ENCODE measurements at regions of chrX and their contacts with region 1.

Region 1: DNA sequence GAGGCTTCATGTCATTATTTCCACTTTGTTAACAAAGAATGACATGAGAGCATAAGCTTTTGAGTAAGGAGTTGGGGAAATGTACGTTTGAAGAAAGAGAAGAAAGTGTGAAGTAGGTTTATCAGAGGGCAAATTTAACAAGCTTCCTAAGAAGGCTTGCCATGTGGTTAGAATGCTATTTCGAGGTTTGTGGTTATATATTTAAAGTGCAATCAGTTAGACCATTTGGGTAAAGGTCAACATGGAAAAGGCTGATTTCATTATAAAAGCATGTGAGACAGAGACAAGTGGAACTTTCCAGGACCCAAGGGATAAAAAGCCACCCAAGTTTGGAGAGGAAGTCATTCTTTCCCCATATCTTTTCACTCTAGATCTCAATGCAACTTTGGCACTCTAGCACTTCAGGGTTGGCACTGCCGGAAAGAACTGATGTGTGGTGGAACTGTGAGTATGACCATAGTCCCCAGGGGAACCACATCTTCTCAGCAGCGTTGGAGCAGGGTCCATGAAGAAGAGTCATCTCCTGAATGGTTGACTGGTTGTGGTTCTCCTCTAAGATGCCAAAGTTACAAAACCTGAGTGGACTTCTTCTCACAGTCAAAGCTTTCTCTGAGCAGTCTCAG is 529.9 kb downstream of the MID1IP1 start:
- DNase-seq: peak; percentile 65
- H3K4me3 Mint-ChIP-seq: peak overlapping the region; percentile 75
- H3K27ac Mint-ChIP-seq: peak overlapping the region; percentile 91
- H3K4me1 Mint-ChIP-seq: peaks cover 63% of the 10 kb centered on the region
- H3K27me3 Mint-ChIP-seq: no peaks in the 10 kb centered on the region

Region 2: DNA sequence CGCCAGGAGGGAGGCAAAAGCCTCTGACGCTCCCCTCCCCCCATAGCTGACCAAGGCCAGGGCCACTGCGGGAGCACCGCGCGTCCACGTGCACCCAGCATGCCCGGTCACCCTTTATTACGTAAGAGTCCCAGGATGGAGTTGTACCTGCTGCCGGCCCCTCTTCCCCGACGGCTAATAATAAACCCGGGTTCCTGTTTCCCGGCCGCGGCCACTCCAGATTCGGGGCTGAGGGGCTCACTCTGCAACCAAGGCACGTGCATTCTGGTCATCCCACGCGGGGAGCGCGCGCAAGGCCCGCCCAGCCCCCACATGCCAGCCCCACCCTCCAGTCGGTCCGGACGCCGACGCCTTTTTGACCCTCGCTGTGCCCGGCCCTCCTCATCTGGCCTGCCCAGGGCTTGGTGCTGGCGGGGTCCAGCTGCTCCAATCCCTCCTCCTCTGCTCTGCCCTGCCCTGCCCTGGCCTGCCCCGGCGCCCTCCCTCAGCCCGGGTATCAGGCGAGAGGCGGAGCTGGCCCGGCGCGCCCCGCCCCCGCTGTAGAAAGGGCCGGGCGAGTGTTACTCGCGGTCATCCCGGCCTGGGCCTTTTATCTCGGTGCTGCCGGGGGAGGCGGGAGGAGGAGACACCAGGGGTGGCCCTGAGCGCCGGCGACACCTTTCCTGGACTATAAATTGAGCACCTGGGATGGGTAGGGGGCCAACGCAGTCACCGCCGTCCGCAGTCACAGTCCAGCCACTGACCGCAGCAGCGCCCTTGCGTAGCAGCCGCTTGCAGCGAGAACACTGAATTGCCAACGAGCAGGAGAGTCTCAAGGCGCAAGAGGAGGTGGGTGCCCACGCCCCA is 527.4 kb before region 1 on chrX:
- intact Hi-C with region 1: loop called (anchors 5 kb)
- DNase-seq: peak; percentile 93
- H3K4me3 Mint-ChIP-seq: peak overlapping the region; percentile 96
- H3K27ac Mint-ChIP-seq: peak overlapping the region; percentile 99
- H3K4me1 Mint-ChIP-seq: peaks cover 16% of the 10 kb centered on the region
- H3K27me3 Mint-ChIP-seq: no peaks in the 10 kb centered on the region

Region 3: GRCh38 chrX:39196192-39197102 is 134.7 kb before region 1 on chrX:
- intact Hi-C with region 1: loop called (anchors 5 kb)
- DNase-seq: peak; percentile 85
- H3K4me3 Mint-ChIP-seq: peak overlapping the region; percentile 47
- H3K27ac Mint-ChIP-seq: peak overlapping the region; percentile 91
- H3K4me1 Mint-ChIP-seq: peaks cover 47% of the 10 kb centered on the region
- H3K27me3 Mint-ChIP-seq: no peaks in the 10 kb centered on the region

Region 4: DNA sequence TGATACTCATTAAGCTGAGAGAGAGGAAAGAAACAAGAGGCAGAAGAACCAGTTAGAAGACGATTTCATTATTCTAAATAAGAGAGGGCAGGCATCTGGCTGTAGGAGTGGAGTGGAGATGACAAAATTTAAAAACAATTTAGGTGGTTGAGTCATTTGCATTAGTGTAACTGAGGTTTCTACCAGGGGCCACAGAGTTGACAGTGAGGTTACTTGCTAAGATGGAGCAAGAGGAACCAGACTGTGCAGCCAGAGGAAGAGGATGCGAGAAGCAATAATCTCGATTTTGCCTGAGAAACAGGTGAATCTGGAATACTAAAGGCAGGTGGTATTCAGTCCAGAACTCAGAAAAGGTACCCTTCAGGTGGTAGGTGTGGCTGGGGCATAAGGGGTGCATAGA is 38.0 kb before region 1 on chrX:
- intact Hi-C with region 1: loop called (anchors 5 kb)
- DNase-seq: no peak
- H3K4me3 Mint-ChIP-seq: peak overlapping the region; percentile 59
- H3K27ac Mint-ChIP-seq: peak overlapping the region; percentile 82
- H3K4me1 Mint-ChIP-seq: peaks cover 33% of the 10 kb centered on the region
- H3K27me3 Mint-ChIP-seq: no peaks in the 10 kb centered on the region

Region 5: DNA sequence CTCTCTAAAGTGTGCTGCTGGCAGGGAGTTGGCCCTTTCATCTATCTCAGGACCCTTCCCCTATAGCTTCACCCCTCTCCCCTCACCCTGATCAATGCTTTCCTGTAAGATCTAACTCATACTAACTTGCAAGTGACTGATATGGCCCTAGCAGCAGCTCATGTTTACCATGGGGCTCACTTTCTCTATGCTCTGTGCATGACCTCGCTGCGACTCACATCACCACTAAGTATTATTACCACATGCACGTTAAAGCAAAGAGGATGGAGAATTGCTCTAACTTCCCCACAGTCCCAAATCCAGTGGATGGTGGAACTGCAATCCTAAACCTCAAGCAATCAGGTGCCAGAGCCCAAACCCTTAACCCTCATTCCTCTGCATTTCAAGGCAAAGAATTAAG is 96.7 kb after region 1 on chrX:
- intact Hi-C with region 1: loop called (anchors 1 kb)
- DNase-seq: peak; percentile 58
- H3K4me3 Mint-ChIP-seq: peak overlapping the region; percentile 12
- H3K27ac Mint-ChIP-seq: peak overlapping the region; percentile 95
- H3K4me1 Mint-ChIP-seq: peaks cover 58% of the 10 kb centered on the region
- H3K27me3 Mint-ChIP-seq: no peaks in the 10 kb centered on the region

Region 6: DNA sequence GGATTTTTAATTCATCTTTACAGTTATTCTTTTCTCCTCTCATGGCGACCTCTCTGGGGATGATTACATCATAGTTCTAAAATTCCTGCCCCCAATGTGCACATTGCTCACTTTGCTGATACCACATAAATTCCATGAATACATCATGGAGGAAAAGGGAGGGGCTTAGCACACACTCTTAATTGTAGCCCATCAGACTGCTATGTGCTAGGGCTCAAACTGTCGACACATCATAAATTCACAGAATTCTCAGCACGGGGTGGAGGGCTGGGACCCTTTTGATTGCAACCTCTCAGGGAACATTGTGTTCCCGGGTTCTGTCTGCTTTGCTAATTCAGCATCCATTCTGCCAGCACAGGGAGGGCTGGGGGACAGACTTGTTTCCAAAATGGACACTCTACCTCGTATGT is 173.7 kb after region 1 on chrX:
- intact Hi-C with region 1: loop called (anchors 5 kb)
- DNase-seq: no peak
- H3K4me3 Mint-ChIP-seq: no peak overlapping the region
- H3K27ac Mint-ChIP-seq: no peak overlapping the region
- H3K4me1 Mint-ChIP-seq: peaks cover 15% of the 10 kb centered on the region
- H3K27me3 Mint-ChIP-seq: no peaks in the 10 kb centered on the region

Region 7: DNA sequence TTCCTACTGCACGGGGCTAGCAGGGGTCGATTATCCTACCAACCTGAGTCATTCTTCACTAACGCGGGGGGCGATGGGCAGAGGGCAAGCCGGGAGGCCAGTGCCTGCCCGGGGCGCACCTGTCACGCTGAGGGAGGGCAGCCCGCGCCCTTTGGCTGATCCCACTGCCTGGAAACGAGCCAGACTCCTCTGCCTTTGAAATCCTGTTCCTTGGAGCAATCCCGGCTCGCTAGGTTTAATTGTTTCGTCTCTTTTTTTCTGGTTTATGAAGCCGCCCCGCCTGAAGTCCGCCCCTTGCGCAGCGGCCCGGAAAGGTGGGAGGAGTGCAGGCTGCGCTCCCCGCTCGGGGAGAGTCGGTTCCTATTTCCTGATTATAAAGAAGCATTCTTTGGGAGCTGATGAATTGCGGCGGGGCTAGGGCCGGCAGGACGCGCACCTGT is 282.3 kb after region 1 on chrX:
- intact Hi-C with region 1: loop called (anchors 1 kb)
- DNase-seq: peak; percentile 63
- H3K4me3 Mint-ChIP-seq: peak overlapping the region; percentile 90
- H3K27ac Mint-ChIP-seq: peak overlapping the region; percentile 98
- H3K4me1 Mint-ChIP-seq: peaks cover 26% of the 10 kb centered on the region
- H3K27me3 Mint-ChIP-seq: no peaks in the 10 kb centered on the region

Region 8: DNA sequence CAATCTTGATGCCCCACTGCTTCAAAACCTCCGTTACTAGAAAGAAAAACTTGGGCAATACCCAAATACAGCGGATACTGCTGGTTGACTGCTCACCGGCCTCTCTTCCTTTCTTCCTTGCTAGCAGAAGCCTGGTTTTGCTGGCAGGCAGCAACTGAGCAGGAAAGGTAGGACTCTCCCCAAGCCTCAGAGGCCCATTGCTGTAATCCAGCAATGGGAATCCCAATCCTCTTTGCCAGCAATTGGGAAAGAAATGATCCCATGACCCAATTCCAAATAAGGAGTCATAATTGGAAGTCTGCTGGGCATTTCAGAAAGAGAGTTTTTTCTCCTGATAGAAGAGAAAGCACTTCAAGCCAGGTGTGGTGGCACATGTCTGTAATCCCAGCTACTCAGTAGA is 372.1 kb after region 1 on chrX:
- intact Hi-C with region 1: no loop called
- DNase-seq: no peak
- H3K4me3 Mint-ChIP-seq: no peak overlapping the region
- H3K27ac Mint-ChIP-seq: no peak overlapping the region
- H3K4me1 Mint-ChIP-seq: no peaks in the 10 kb centered on the region
- H3K27me3 Mint-ChIP-seq: no peaks in the 10 kb centered on the region